Dorsolateral prefrontal cortex (tissue), 120 donors: ENCODE measurements at regions of chr6 and their contacts with region 1.

Region 1: DNA sequence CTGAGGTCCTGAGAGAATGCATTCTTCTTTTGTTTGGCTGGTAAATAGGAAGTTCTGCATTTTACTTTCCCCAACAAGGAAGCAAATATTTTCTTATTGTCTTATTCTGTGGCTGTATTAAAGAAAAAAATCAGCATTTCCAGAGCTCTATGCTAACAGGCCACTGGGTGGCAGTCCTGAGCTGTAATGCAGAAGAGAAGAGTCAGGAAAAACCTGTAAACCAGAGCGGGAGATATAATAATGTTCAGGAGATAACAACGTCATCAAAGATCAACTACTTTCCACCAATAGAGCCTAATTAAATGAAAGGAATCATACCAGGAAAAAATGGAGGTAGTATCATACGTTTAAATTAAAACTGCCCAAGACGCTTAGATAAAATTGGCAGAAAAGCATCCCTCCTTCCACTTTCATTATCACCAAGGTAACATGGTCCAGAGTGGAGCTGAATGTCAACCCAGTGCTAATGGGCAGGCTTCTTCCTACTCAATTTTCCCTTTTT is 55.6 kb upstream of the CARMIL1 start:
- DNase-seq: peak in 8 of 10 donors; percentile 28 to 69 (median 58)
- H3K4me3 ChIP-seq: peak overlapping the region in 53 of 59 donors; percentile 8 to 62 (median 38)
- H3K27ac ChIP-seq: peak overlapping the region in 1 of 59 donors; percentile 15
- H3K27me3 ChIP-seq: no peaks in the 10 kb centered on the region
- CTCF ChIP-seq: peak; percentile 73 to 96 (median 86)

Region 2: DNA sequence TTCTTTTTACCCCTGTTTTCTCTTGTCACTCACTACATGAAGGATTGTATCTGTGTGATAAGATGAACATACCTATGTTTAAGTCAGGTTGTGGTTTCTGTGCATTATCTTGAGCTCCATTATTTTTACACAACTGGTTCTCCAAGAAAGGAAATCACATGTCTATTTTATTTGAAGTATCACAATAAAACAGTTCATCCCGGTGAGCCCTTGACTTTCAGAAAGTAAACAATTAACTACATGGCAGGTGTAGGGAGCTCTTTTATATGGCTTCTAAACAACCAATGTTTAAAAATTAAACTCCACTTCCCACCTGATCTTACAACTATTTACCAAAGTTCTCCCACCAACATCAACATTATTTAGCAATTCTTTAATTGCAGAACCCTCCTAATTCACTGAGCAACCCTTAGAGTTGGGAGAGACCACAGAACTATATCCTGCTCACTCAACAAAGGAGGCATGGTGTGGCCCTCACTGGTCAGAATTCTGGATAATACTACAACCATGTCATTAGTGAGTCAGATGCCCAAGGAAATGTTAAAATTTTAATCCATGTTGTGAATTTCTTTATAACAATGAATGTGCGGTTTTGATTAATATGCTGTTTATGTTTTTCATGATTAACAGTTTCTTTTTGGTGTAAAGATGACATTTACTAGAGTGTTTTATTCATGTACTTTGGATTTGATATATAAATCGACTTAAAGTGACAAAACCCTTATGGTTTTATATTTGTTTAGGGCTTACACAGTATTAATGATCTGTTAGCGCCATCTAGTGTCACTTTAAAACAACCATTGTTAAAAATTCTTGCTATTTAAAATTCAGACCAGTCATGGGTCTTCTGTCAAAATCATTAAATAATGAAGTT is 378.5 kb after region 1 on chr6:
- intact Hi-C with region 1: loop called in 1 of 2 experiments (anchors 5 kb)
- DNase-seq: no peak
- H3K4me3 ChIP-seq: no peak overlapping the region
- H3K27ac ChIP-seq: no peak overlapping the region
- H3K27me3 ChIP-seq: peaks cover 0 to 9% (median 0%) of the 10 kb centered on the region in 45 donors
- CTCF ChIP-seq: peak; percentile 52 to 89 (median 70)

Region 3: DNA sequence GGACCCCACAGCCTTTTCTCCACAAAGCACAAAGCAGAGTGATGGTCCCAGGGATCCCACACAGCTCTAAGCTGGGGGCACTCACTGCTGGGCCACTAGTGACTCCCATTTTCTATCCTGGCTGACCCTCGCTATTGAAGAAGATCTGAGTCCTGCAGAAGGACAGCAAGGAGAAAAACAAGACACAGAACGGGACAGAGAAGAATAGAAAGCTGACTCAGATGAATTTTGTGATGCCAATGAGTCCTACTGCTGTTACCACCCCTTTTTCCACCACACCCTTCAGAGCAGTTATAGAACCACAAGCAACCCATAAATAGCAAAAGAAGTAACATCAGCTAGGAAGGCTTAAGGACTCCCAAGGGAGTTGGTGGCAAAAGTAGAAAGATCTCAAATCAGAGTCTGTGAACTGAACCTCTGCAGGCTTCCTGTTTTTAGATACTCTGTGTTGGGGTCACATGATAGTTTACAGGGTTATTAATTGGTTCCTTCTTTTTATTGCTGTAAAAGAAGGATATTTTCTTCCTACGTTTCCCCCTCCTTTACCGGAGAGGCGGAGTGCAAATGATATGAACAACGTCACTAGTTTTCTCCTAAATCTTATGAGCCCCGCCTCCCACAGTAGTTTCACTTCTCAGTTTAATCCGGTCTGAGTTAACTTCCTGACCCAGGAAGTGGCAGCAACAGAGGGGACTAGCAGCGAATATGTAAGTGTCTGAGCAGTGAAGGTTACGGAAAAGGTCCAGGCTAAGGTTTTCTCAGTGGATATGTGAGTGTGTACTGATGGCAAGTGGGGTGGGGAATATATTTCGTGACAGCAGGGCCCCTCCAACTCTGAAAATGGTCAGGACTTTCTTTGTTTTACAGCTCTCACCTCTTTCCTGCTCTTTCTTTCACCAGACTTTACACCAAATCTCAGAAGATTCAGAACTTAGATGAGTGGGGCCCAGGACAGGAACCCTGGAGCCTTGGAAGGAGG is 738.9 kb after region 1 on chr6 and contains the start of gene TRIM38:
- intact Hi-C with region 1: no loop called
- DNase-seq: peak in 2 of 10 donors; percentile 3 to 32
- H3K4me3 ChIP-seq: peak within 1 kb of the TSS in 55 of 59 donors; percentile 12 to 65 (median 46)
- H3K27ac ChIP-seq: peak within 1 kb of the TSS in 56 of 59 donors; percentile 8 to 88 (median 77)
- H3K27me3 ChIP-seq: peaks cover 0 to 2% (median 0%) of the 10 kb centered on the region in 45 donors
- CTCF ChIP-seq: peak in 1 of 56 donors; percentile 16
- total RNA-seq, gene TRIM38: 0.68 to 4.3 (median 1.8) TPM